Activated B cell treated with CpG ODN at 0.5 μM for 24 hours (primary cell): ENCODE measurements at regions of chr11 and their contacts with region 1.

Region 1: DNA sequence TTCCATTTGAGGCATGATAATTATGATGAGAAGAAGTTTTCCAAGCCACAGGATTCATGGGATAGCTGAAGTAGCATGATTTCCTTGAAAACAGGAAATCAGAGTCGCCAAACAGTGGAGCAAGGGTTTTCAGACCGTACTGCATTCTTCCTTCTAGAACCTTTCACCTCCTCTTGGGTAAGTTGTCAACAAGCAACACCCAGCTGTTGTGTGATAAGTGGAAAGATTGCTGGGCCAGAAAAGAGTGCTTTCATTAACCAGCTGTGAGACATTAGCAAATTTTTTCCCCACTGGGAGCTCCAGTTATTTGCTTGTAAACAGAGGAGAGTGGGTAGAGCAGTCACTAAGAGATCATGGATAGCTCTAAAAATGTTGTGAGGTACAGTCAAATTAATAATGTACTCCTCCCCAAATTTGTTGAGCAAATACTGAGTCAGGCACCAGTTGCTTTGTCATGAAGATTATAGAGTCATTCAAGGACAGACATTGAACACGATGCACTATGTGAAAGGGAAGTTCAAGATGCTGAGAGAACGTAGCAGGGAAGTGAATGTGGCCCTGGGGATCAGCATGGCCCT is 11.7 kb upstream of the MPEG1 start:
- DNase-seq: no peak
- ATAC-seq: peak; percentile 65
- H3K4me3 Mint-ChIP-seq: peak overlapping the region; percentile 16
- H3K27ac Mint-ChIP-seq: peak overlapping the region; percentile 81
- H3K4me1 Mint-ChIP-seq: peaks cover 59% of the 10 kb centered on the region
- H3K27me3 Mint-ChIP-seq: no peaks in the 10 kb centered on the region
- CTCF ChIP-seq: no peak

Region 2: GRCh38 chr11:59263225-59263894 is 38.9 kb after region 1 on chr11:
- CTCF ChIA-PET with region 1: interaction called, 17 read pairs
- POLR2A ChIA-PET with region 1: interaction called, 6 read pairs
- intact Hi-C with region 1: no loop called
- DNase-seq: peak; percentile 52
- ATAC-seq: peak; percentile 65
- H3K4me3 Mint-ChIP-seq: no peak overlapping the region
- H3K27ac Mint-ChIP-seq: no peak overlapping the region
- H3K4me1 Mint-ChIP-seq: peaks cover 71% of the 10 kb centered on the region
- H3K27me3 Mint-ChIP-seq: no peaks in the 10 kb centered on the region
- CTCF ChIP-seq: no peak